HCT116 (cell line): ENCODE measurements at regions of chr2 and their contacts with region 1.

Region 1: DNA sequence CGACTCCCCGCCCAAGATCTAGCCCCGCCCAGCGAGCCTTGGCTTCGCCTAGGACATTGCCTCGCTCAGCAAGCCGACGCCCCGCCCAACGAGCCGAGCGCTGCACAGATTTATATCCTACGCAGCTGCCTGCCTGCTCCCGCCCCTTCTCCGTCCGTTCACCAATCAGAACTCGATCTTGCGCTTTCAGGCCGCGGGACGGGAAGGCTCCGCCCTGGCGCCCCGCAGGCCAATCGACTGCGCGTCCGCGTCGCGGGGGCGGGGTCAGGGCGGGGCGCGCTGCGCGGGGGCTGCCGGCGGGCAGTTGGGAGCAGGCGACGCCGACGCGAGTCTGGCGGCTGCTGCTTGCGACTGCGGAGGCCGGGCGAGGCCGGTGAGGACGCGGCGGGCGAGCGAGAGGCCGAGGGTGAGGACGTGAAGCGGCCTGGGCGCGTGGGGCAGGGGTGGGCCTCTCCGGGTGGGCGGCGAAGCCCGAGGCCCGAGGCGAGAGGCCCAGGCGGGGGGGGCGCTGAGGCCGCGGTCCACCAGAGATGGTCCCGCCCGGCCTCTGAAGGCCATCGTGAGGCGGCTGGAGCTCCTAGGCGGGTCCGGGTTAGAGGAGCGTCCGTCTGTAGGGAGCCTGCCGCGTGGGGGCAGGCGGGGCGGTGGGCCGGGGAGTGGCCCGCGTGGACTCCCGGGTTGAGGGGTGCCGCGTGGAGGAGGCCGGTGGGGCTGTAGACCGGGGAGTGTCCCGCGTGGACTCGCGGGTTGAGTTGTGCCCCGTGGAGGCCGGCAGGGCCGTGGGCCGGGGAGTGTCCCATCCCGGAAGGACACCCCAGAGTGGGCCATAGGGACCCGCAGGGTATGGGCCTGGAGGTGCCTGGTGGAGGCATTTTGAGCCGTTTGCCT is at the start of gene FARP2:
- DNase-seq: peak; percentile 94
- ATAC-seq: peak; percentile 87
- H3K4me3 ChIP-seq: peak within 1 kb of the TSS; percentile 87 to 89
- H3K27ac ChIP-seq: peak within 1 kb of the TSS; percentile 65
- H3K4me1 ChIP-seq: peaks cover 17 to 22% of the 10 kb centered on the region in 2 experiments
- H3K27me3 ChIP-seq: no peaks in the 10 kb centered on the region
- CTCF ChIP-seq: no peak
- POLR2A ChIP-seq: no peak
- RAD21 ChIP-seq: no peak
- total RNA-seq, gene FARP2: 49.3 TPM

Region 2: GRCh38 chr2:241315093-241315878 is 40.9 kb before region 1 on chr2 and contains the start of gene HDLBP:
- CTCF ChIA-PET with region 1: no interaction called
- POLR2A ChIA-PET with region 1: no interaction called
- RAD21 ChIA-PET with region 1: no interaction called
- intact Hi-C with region 1: loop called (anchors 2 kb)
- DNase-seq: peak; percentile 97
- ATAC-seq: peak; percentile 85
- H3K4me3 ChIP-seq: peak within 1 kb of the TSS; percentile 94 to 98
- H3K27ac ChIP-seq: peak within 1 kb of the TSS; percentile 85
- H3K4me1 ChIP-seq: peaks cover 15 to 33% of the 10 kb centered on the region in 2 experiments; a peak in 3 of 4 replicates
- H3K27me3 ChIP-seq: no peaks in the 10 kb centered on the region
- CTCF ChIP-seq: no peak; a peak in 1 of 6 replicates
- POLR2A ChIP-seq: peak; percentile 76
- RAD21 ChIP-seq: no peak
- total RNA-seq, gene HDLBP: 462 TPM

Region 3: GRCh38 chr2:241508240-241509154 is 152.3 kb after region 1 on chr2 and contains the start of gene STK25:
- CTCF ChIA-PET with region 1: no interaction called
- POLR2A ChIA-PET with region 1: no interaction called
- RAD21 ChIA-PET with region 1: no interaction called
- intact Hi-C with region 1: loop called (anchors 5 kb)
- DNase-seq: peak; percentile 94
- ATAC-seq: peak; percentile 91
- H3K4me3 ChIP-seq: peak within 1 kb of the TSS; percentile 87 to 95
- H3K27ac ChIP-seq: peak within 1 kb of the TSS; percentile 82
- H3K4me1 ChIP-seq: peaks cover 12 to 24% of the 10 kb centered on the region in 2 experiments
- H3K27me3 ChIP-seq: 0 out of 2 replicates have a peak, but pooled peaks cover 3% of the 10 kb centered on the region
- CTCF ChIP-seq: no peak
- POLR2A ChIP-seq: no peak
- RAD21 ChIP-seq: no peak
- total RNA-seq, gene STK25: 160 TPM

Region 4: GRCh38 chr2:241558532-241559322 is 202.5 kb after region 1 on chr2 and contains the start of gene BOK:
- CTCF ChIA-PET with region 1: no interaction called
- POLR2A ChIA-PET with region 1: no interaction called
- RAD21 ChIA-PET with region 1: no interaction called
- intact Hi-C with region 1: loop called (anchors 5 kb)
- DNase-seq: peak; percentile 72
- ATAC-seq: peak; percentile 77
- H3K4me3 ChIP-seq: peak within 1 kb of the TSS; percentile 67 to 79
- H3K27ac ChIP-seq: peak within 1 kb of the TSS; percentile 95
- H3K4me1 ChIP-seq: peaks cover 29 to 56% of the 10 kb centered on the region in 2 experiments; a peak in 3 of 4 replicates
- H3K27me3 ChIP-seq: no peaks in the 10 kb centered on the region
- CTCF ChIP-seq: no peak
- POLR2A ChIP-seq: peak; percentile 31
- RAD21 ChIP-seq: no peak
- total RNA-seq, gene BOK: 41.5 TPM

Region 5: DNA sequence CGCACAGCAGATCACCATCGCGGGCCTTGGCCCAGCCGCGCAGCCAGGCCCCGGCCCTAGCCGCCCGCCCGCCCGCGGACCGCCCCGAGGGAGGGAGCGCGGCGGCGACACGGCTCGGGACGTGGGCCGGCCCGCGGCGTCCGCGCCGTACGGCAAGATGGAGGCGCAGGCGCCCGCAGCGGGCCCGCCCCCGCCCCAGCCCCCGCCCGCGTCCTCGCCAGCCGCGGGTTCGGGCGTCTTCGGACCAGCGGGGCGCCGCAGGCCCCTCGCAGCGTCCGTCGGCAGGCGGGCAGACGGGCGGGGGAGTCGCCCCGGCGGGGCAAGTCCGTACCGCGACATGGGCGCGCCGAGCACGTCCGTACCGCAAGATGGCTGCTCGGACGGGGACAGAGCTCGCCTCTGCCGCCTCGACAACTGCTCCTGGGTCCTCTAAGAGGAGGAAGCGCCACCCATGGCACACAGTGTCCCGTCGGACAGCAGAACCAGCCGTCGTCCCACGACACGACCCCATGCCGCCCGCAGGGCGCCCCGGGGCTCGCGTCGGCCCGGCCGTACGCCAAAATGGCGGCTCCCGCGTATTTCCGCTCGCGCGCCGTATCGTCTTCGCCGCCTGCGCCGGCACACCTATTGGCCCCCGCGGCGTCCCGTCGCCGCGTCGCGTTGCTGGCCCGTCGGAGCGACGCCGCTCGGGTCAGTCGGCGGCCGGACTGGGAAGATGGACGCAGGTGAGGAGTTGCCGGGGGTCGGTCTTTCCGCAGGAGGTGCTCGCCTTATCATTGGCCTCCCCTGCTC is 281.0 kb after region 1 on chr2 and contains the starts of genes ATG4B and THAP4:
- CTCF ChIA-PET with region 1: no interaction called
- POLR2A ChIA-PET with region 1: no interaction called
- RAD21 ChIA-PET with region 1: no interaction called
- intact Hi-C with region 1: loop called (anchors 5 kb)
- DNase-seq: peak; percentile 78
- ATAC-seq: peak; percentile 79
- H3K4me3 ChIP-seq: peak within 1 kb of the TSS; percentile 72 to 80
- H3K27ac ChIP-seq: peak within 1 kb of the TSS; percentile 88
- H3K4me1 ChIP-seq: peaks cover 7 to 24% of the 10 kb centered on the region in 2 experiments; a peak in 3 of 4 replicates
- H3K27me3 ChIP-seq: no peaks in the 10 kb centered on the region
- CTCF ChIP-seq: no peak
- POLR2A ChIP-seq: no peak
- RAD21 ChIP-seq: no peak
- total RNA-seq, gene ATG4B: 87.4 TPM
- total RNA-seq, gene THAP4: 71.2 TPM

Region 6: GRCh38 chr2:241702132-241703031 is 346.2 kb after region 1 on chr2:
- CTCF ChIA-PET with region 1: no interaction called
- POLR2A ChIA-PET with region 1: no interaction called
- RAD21 ChIA-PET with region 1: no interaction called
- intact Hi-C with region 1: loop called (anchors 5 kb)
- DNase-seq: peak; percentile 59
- ATAC-seq: peak; percentile 74
- H3K4me3 ChIP-seq: peak overlapping the region; percentile 67 to 69
- H3K27ac ChIP-seq: peak overlapping the region; percentile 99
- H3K4me1 ChIP-seq: peaks cover 14 to 31% of the 10 kb centered on the region in 2 experiments
- H3K27me3 ChIP-seq: no peaks in the 10 kb centered on the region
- CTCF ChIP-seq: peak; percentile 49 to 61 (median 58)
- POLR2A ChIP-seq: no peak
- RAD21 ChIP-seq: no peak

Region 7: GRCh38 chr2:241877989-241878970 is 522.1 kb after region 1 on chr2:
- CTCF ChIA-PET with region 1: no interaction called
- POLR2A ChIA-PET with region 1: no interaction called
- RAD21 ChIA-PET with region 1: no interaction called
- intact Hi-C with region 1: loop called (anchors 5 kb)
- DNase-seq: no peak
- ATAC-seq: peak; percentile 41
- H3K4me3 ChIP-seq: no peak overlapping the region
- H3K27ac ChIP-seq: no peak overlapping the region
- H3K4me1 ChIP-seq: peaks cover 10 to 23% of the 10 kb centered on the region in 2 experiments; a peak in 3 of 4 replicates
- H3K27me3 ChIP-seq: no peaks in the 10 kb centered on the region
- CTCF ChIP-seq: peak; percentile 56 to 72 (median 63); a peak in 5 of 6 replicates
- POLR2A ChIP-seq: no peak
- RAD21 ChIP-seq: peak; percentile 85